ENCODE measurements at regions of chr6 and their contacts with region 1.

Region 1: GRCh38 chr6:52598123-52598823 is 21.4 kb upstream of the TRAM2 start:
- DNase-seq: peak; percentile 57 to 85 (median 79)
- H3K4me3 ChIP-seq: peak overlapping the region in 1 of 4 donors; percentile 26
- H3K27ac ChIP-seq: peak overlapping the region in 2 of 5 donors; percentile 35 to 63
- H3K4me1 ChIP-seq: peaks cover 4 to 15% of the 10 kb centered on the region in 2 donors
- H3K27me3 ChIP-seq: no peaks in the 10 kb centered on the region
- CTCF ChIP-seq: peak; percentile 71 to 91 (median 80)
- POLR2A ChIP-seq: no peak

Region 2: DNA sequence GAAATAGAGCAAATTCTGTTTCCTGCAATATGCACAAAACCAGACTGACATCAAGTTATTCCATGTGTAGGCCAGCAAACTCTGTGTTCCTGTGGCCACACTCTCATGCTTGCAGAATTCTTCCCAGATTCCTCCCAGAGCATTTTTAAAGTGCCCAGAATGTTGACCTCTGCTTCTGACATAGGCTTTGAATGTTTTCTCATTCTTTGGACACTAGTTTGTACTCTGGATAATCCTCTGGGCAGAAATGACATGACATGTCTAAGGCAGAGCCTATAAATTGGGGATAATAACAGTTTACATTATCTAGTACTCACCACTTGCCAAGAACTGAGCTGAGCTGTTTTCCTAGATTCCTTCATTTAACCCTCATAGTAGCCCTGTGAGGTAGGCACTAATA is 187.3 kb before region 1 on chr6:
- intact Hi-C with region 1: loop called (anchors 5 kb)
- DNase-seq: no peak
- H3K4me3 ChIP-seq: no peak overlapping the region
- H3K27ac ChIP-seq: no peak overlapping the region
- H3K4me1 ChIP-seq: peaks cover 0 to 3% of the 10 kb centered on the region in 2 donors
- H3K27me3 ChIP-seq: no peaks in the 10 kb centered on the region
- CTCF ChIP-seq: no peak
- POLR2A ChIP-seq: no peak

Region 3: DNA sequence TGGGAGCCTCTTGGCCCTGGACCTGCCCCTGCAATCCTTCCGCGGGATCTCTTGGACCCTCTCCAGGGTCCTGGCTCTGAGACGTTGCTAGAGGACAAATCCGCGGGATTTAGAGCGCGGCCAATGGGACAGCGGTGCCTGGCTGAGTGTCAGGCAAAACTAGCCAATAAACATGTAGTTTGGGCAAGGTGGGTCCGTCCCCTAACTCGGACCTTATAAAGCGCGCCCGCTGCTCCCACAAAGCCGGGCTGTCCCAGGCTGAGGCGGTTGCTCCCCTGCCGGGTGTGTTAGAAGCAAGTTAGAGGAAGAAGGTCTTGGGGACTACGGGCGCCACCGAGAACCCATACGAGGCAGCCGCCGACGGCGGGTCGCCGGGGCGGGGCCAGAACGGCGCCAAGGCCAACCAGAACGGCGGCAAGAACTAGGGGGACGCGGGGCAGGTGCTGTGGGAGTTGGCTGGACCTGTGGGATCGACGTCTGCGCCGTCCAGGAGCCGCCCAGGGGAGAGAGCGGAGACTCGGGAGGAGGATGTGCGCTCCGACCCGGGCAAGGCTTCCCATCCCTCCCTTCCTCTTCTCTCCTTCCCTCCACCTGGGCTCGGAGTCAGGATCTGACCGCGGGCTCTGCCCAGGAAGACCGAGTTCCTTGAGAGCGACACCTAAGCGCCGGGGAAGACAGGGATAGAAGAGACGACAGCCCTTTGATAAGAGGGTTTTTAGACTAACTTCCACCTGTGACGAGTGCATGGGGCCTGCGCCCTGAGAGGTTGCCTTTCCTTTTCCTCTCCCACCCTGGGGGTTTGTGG is 66.1 kb after region 1 on chr6:
- intact Hi-C with region 1: loop called in 1 of 2 experiments (anchors 10 kb)
- DNase-seq: peak; percentile 87 to 97 (median 94)
- H3K4me3 ChIP-seq: peak overlapping the region; percentile 10 to 72 (median 69)
- H3K27ac ChIP-seq: peak overlapping the region in 3 of 5 donors; percentile 55 to 65 (median 61)
- H3K4me1 ChIP-seq: peaks cover 0 to 12% of the 10 kb centered on the region in 2 donors
- H3K27me3 ChIP-seq: no peaks in the 10 kb centered on the region
- CTCF ChIP-seq: no peak
- POLR2A ChIP-seq: peak; percentile 88 to 90

Region 4: DNA sequence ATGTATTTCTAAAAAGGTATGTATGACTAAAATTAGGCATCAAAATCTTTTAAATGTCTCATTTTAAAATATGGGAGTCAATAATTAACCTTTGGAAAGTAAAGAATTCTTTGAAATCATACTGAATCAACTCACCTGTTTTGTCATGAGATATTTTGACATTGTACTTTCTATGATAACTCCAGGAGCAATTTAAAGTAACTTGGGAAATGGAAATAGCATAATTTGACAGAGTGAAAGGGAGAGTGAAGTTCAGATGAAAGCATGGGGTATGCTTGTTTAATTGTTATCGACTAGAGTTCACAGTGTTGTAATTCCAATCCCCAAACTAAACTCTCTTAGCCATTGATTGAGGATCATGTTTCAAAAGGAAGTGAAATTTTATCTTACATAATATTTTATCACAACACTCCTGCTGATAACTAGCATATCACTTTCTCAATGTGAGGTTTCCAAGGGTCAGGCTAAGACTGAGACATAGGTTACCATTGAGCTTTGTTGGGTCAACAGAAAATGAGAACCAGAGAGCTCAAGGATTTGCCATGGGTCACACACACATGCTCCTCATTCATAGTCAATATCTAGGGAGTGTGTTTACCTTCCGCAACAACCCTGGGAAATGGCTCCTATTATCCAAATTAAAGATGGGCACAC is 203.0 kb after region 1 on chr6:
- intact Hi-C with region 1: no loop called
- DNase-seq: no peak
- H3K4me3 ChIP-seq: no peak overlapping the region
- H3K27ac ChIP-seq: no peak overlapping the region
- H3K4me1 ChIP-seq: no peaks in the 10 kb centered on the region
- H3K27me3 ChIP-seq: no peaks in the 10 kb centered on the region
- CTCF ChIP-seq: no peak
- POLR2A ChIP-seq: no peak